Activated T-helper 2 cell treated with anti-CD3 and anti-CD28 coated beads, Interferon-gamma antibody, Interleukin-2, Interleukin-4, amounts not matched to agents 10 μg/mL and 5 μg/mL and 100 μg/mL, durations not matched to agents 14 hours and 24 hours and 36 hours (primary cell): ENCODE measurements at regions of chr14 and their contacts with region 1.

Region 1: GRCh38 chr14:49692811-49693734 is at the start of gene KLHDC1:
- DNase-seq: peak; percentile 68
- H3K4me3 Mint-ChIP-seq: peak within 1 kb of the TSS; percentile 84
- H3K27ac Mint-ChIP-seq: peak within 1 kb of the TSS; percentile 84
- H3K4me1 Mint-ChIP-seq: peaks cover 30% of the 10 kb centered on the region
- H3K27me3 Mint-ChIP-seq: no peaks in the 10 kb centered on the region
- total RNA-seq, gene KLHDC1: 0.78 and 0.96 TPM in 2 replicates

Region 2: GRCh38 chr14:49451938-49452337 is 241.1 kb before region 1 on chr14:
- intact Hi-C with region 1: no loop called
- DNase-seq: no peak
- H3K4me3 Mint-ChIP-seq: no peak overlapping the region
- H3K27ac Mint-ChIP-seq: no peak overlapping the region
- H3K4me1 Mint-ChIP-seq: no peaks in the 10 kb centered on the region
- H3K27me3 Mint-ChIP-seq: peaks cover 7% of the 10 kb centered on the region

Region 3: DNA sequence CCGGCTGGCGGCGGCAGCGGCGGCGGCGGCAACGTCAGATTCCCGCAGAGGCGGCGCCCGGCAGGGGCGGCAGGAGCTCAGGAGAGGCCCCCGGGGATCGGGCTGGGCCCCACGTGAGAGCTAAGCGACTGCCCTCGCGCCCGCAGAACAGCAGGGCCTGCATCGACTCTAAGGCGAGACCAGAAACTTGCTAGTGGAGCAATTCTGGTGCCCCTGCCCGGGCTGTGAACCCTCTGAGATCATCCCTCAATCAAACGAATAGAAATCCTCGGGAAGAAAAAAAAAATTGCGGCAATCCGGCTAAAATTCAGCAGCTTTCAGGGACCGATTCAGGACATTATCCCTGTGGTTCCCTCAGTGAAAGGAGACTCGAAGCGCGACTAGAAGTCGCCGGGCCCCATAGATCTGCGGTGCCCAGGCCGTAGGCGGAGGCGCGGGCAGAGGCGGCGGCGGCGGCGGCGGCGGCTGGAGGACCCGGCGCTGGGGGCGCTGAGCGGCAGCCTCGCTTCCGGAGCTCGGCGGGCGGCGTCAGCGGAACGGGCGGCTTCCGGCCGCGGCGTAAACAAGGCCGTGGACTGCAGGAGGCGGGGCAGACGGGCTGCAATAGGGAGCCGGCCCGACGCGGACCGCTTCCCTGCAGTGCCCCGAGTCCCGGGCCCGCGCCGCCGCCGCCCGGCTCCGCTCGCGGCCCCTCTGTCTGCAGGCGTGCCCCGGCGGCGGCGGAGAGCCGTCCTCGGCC is 74.7 kb after region 1 on chr14 and contains the start of gene KLHDC2:
- intact Hi-C with region 1: loop called (anchors 1 kb)
- DNase-seq: peak; percentile 89
- H3K4me3 Mint-ChIP-seq: peak within 1 kb of the TSS; percentile 96
- H3K27ac Mint-ChIP-seq: peak within 1 kb of the TSS; percentile 100
- H3K4me1 Mint-ChIP-seq: peaks cover 31% of the 10 kb centered on the region
- H3K27me3 Mint-ChIP-seq: no peaks in the 10 kb centered on the region
- total RNA-seq, gene KLHDC2: 28.9 and 31.6 TPM in 2 replicates

Region 4: GRCh38 chr14:49862089-49862673 is 169.1 kb after region 1 on chr14:
- intact Hi-C with region 1: loop called (anchors 5 kb)
- DNase-seq: peak; percentile 83
- H3K4me3 Mint-ChIP-seq: no peak overlapping the region
- H3K27ac Mint-ChIP-seq: no peak overlapping the region
- H3K4me1 Mint-ChIP-seq: peaks cover 16% of the 10 kb centered on the region
- H3K27me3 Mint-ChIP-seq: no peaks in the 10 kb centered on the region

Region 5: GRCh38 chr14:50311975-50312733 is 619.1 kb after region 1 on chr14 and contains the starts of genes DMAC2L and L2HGDH:
- intact Hi-C with region 1: loop called (anchors 5 kb)
- DNase-seq: peak; percentile 89
- H3K4me3 Mint-ChIP-seq: peak within 1 kb of the TSS; percentile 91
- H3K27ac Mint-ChIP-seq: peak within 1 kb of the TSS; percentile 98
- H3K4me1 Mint-ChIP-seq: peaks cover 47% of the 10 kb centered on the region
- H3K27me3 Mint-ChIP-seq: no peaks in the 10 kb centered on the region
- total RNA-seq, gene DMAC2L: 13.6 and 16.2 TPM in 2 replicates
- total RNA-seq, gene L2HGDH: 14.1 and 14.2 TPM in 2 replicates